ENCODE measurements at regions of chr11 and their contacts with region 1.

Region 1: DNA sequence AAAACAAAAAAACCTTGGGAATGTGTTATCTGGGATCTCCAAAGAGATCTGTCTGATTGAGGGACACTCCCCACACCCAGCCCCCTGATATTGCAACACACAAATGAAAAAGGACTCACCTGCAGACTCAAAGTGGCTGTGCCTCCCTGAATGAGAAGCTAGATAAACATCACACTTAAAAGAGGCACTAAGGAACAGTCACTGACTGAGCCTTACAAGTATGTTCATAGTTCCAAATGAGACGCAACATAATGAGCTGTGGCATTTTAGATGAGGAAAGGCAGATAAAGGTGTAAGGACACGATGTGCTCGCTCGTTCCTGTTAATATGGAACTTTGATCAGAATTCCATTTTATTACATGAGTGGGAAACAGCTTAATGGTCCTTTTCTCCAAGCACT is 21.0 kb upstream of the CFAP300 start:
- DNase-seq: no peak
- H3K4me3 ChIP-seq: no peak overlapping the region
- H3K27ac ChIP-seq: peak overlapping the region in 3 of 4 donors; percentile 13 to 48 (median 41)
- H3K4me1 ChIP-seq: peaks cover 0 to 16% (median 12%) of the 10 kb centered on the region in 4 donors
- H3K27me3 ChIP-seq: no peaks in the 10 kb centered on the region
- CTCF ChIP-seq: no peak
- EP300 ChIP-seq: no peak
- POLR2A ChIP-seq: no peak

Region 2: GRCh38 chr11:101576456-101576855 is 449.8 kb before region 1 on chr11:
- in situ Hi-C with region 1: no loop called
- intact Hi-C with region 1: no loop called
- DNase-seq: no peak
- H3K4me3 ChIP-seq: no peak overlapping the region
- H3K27ac ChIP-seq: no peak overlapping the region
- H3K4me1 ChIP-seq: no peaks in the 10 kb centered on the region
- H3K27me3 ChIP-seq: peaks cover 6% of the 10 kb centered on the region
- CTCF ChIP-seq: no peak
- EP300 ChIP-seq: no peak
- POLR2A ChIP-seq: no peak

Region 3: DNA sequence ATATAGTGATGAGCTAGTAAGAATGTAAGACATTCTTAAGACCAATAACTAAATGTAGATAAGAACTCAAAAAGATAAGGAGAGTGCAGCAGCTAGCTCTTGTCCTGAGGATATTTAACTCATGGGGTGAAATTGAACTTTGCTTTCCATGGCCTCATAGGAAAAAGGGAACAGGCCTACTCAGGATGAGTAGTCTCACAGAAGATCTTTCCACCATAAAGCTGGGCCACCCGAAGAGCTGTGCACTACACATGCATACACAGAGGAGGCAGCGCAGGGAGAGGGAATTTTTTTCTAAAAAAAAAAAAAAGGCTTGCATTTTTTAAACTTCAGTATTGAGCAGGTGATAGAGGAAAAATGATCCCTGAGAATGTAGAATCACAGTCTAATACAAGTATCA is 38.8 kb before region 1 on chr11:
- in situ Hi-C with region 1: no loop called
- intact Hi-C with region 1: no loop called
- DNase-seq: no peak
- H3K4me3 ChIP-seq: no peak overlapping the region
- H3K27ac ChIP-seq: no peak overlapping the region
- H3K4me1 ChIP-seq: no peaks in the 10 kb centered on the region
- H3K27me3 ChIP-seq: no peaks in the 10 kb centered on the region
- CTCF ChIP-seq: no peak
- EP300 ChIP-seq: no peak
- POLR2A ChIP-seq: no peak

Region 4: DNA sequence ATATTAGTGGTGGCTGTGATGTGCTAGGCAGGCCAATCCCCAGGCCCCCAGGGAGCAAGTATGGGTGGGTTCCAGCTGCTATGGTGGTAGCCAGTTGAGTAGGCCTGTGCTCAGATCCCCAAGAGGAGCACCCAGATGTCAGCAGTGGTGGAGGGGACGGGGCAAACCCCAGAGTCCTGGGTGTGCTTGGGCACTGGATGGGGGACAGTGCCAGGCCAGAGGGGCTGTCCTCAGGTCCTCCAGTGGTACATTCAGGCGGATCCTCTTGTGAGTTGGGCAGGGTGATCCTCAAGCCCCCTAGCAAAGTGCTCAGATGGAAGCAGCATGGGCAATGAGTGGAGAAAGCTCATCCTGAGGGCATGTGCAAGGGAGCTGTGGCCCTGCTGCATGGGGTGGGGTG is 47.0 kb after region 1 on chr11:
- in situ Hi-C with region 1: no loop called
- intact Hi-C with region 1: loop called (anchors 1 kb)
- DNase-seq: no peak
- H3K4me3 ChIP-seq: no peak overlapping the region
- H3K27ac ChIP-seq: no peak overlapping the region
- H3K4me1 ChIP-seq: no peaks in the 10 kb centered on the region
- H3K27me3 ChIP-seq: no peaks in the 10 kb centered on the region
- CTCF ChIP-seq: no peak
- EP300 ChIP-seq: no peak
- POLR2A ChIP-seq: no peak

Region 5: DNA sequence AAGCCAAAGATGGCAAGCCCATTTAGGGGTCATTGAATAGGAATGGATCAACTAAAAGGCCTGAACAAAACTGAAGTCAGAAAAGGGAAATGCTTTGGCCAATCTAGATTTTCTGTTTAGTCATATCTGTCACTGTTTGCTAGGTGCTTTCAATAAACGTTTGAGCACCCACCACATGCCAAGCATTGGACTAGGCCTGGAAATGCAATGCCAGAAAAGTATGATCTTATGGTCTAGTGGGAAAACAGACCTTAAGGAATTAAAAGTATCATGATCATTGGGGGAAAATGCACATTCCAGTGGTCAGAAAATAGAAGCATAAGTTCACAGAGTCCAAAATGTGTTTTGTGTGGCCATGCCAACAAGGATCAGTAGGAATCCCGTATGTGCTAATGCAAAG is 214.3 kb after region 1 on chr11:
- in situ Hi-C with region 1: no loop called
- intact Hi-C with region 1: no loop called
- DNase-seq: no peak
- H3K4me3 ChIP-seq: no peak overlapping the region
- H3K27ac ChIP-seq: no peak overlapping the region
- H3K4me1 ChIP-seq: peaks cover 0 to 8% (median 4%) of the 10 kb centered on the region in 4 donors
- H3K27me3 ChIP-seq: no peaks in the 10 kb centered on the region
- CTCF ChIP-seq: no peak
- EP300 ChIP-seq: no peak
- POLR2A ChIP-seq: no peak